ENCODE measurements at regions of chr6 and their contacts with region 1.

Region 1: DNA sequence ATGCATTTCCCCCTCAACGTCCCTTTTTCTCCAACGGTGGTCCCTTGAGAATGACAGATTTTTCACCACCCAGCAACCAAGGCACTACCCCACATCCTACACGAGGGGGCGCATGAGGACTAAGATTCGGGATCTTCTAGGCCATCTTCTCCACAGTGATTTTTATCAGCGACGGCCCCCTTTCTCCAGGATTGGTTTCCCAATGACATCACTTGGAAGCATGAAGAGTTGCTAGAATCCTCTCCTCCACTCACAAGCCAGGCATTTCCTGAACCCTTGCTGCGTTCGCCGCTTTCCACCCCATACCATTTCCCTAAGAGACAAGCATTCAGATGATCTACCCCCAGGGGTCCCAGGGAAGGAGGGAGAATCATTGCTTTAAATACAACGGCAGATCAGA is 252.0 kb downstream of the HIVEP2 start:
- DNase-seq: peak; percentile 73
- ATAC-seq: peak; percentile 84
- H3K4me3 Mint-ChIP-seq: no peak overlapping the region
- H3K27ac Mint-ChIP-seq: no peak overlapping the region
- H3K4me1 Mint-ChIP-seq: peaks cover 24% of the 10 kb centered on the region
- H3K27me3 Mint-ChIP-seq: no peaks in the 10 kb centered on the region
- CTCF ChIP-seq: peak; percentile 82

Region 2: DNA sequence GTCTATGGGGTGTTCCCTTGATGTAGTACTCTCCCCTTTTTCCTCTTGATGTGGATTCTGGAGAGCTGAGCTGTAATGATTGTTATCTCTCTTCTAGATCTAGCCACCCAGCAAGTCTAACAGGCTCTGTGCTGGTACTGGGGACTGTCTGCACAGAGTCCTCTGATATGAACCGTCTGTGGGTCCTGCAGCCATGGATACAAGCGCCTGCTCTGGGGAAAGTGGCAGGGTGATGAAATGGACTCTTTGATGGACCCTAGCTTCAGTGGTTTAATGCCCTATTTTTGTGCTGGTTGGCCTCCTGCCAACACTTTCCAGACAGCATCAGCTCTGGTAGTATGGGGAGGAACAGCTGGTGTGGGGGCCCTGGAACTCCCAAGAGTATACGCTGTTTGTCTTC is 174.8 kb before region 1 on chr6:
- CTCF ChIA-PET with region 1: no interaction called
- POLR2A ChIA-PET with region 1: no interaction called
- intact Hi-C with region 1: no loop called
- DNase-seq: no peak
- ATAC-seq: no peak
- H3K4me3 Mint-ChIP-seq: no peak overlapping the region
- H3K27ac Mint-ChIP-seq: no peak overlapping the region
- H3K4me1 Mint-ChIP-seq: no peaks in the 10 kb centered on the region
- H3K27me3 Mint-ChIP-seq: no peaks in the 10 kb centered on the region
- CTCF ChIP-seq: no peak

Region 3: DNA sequence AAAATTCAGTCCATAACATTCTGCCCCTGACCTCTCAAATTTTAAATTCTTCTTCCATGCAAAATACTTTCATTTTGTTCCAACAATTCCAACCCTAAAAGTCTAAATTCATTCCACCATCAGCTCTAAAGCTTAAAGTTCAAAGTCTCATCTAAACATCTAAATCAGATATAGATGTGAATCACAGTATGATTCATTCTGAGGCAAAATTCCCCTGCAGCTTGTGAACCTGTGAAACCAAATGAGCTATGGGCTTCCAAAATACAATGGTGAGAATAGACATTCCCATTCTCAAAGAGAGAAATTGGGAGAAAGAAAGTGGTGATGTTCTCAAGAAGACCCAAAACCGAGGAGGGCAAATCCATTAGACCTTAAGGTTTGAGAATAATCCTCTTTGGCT is 57.8 kb before region 1 on chr6:
- CTCF ChIA-PET with region 1: no interaction called
- POLR2A ChIA-PET with region 1: no interaction called
- intact Hi-C with region 1: no loop called
- DNase-seq: no peak
- ATAC-seq: no peak
- H3K4me3 Mint-ChIP-seq: no peak overlapping the region
- H3K27ac Mint-ChIP-seq: no peak overlapping the region
- H3K4me1 Mint-ChIP-seq: peaks cover 2% of the 10 kb centered on the region
- H3K27me3 Mint-ChIP-seq: no peaks in the 10 kb centered on the region
- CTCF ChIP-seq: no peak

Region 4: DNA sequence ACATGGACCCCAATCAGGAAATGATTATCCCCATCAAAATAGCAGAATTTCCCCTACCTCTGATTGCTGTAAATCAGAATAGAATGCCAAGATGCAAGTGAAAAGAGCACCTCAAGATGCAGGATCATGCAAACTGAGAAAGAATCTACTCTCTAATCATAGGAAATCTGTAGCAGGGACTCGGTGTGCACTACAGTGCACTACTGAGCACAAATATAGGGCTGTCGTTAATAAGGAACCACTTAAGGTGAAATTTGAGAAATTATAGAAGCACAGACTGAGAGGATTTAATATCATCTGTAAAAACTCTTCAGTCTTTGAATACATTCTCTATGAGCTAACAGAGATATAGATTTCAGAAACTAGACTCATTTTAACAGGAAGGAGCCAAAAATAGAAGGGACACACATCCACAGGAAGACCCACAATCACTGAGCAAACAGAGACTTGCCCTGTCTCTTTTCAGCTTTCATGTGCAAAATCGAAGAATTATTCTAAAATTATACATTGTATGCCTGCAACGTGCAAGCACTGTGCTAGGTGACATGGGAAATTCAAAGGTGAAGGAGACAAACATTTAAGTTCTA is 26.2 kb before region 1 on chr6:
- CTCF ChIA-PET with region 1: no interaction called
- POLR2A ChIA-PET with region 1: no interaction called
- intact Hi-C with region 1: no loop called
- DNase-seq: no peak
- ATAC-seq: no peak
- H3K4me3 Mint-ChIP-seq: no peak overlapping the region
- H3K27ac Mint-ChIP-seq: no peak overlapping the region
- H3K4me1 Mint-ChIP-seq: peaks cover 14% of the 10 kb centered on the region
- H3K27me3 Mint-ChIP-seq: no peaks in the 10 kb centered on the region
- CTCF ChIP-seq: no peak

Region 5: DNA sequence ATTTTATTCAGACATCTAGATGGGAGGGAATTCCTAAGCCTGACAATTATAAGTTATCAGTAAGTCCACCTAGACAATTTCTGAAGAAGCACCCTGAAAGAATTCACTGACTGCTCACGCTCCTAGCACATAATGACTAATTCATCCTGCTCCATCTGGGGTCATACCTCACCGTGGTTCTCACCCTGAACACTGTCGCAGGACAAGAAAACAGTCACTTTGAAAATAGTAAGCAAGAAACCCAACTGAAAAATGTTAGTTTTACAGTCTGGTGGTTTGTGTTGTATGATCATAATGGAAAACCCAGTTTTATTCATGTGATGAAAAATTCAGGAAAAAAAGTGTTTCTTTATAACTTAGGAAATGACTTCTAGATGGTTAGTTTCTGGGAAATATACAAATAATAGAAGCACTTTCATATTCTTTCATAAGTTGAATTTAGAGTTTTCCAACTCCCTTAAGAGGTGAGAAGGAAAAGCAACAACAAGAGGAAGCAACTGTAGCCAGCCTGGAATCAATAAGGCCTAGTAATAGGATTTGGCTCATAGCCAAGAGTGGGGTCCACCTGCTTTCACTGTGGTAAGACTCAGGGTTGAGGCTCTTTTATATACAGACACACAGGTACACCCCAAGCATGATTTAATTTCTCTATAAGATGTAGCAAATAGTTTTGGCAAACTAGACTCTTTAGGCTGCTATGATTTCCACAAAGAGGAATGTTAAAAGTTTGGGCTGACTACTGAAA is 157.9 kb after region 1 on chr6:
- CTCF ChIA-PET with region 1: interaction called, 10 read pairs
- POLR2A ChIA-PET with region 1: interaction called, 3 read pairs
- intact Hi-C with region 1: loop called (anchors 5 kb)
- DNase-seq: peak; percentile 68
- ATAC-seq: peak; percentile 64
- H3K4me3 Mint-ChIP-seq: peak overlapping the region; percentile 40
- H3K27ac Mint-ChIP-seq: peak overlapping the region; percentile 93
- H3K4me1 Mint-ChIP-seq: peaks cover 97% of the 10 kb centered on the region
- H3K27me3 Mint-ChIP-seq: no peaks in the 10 kb centered on the region
- CTCF ChIP-seq: no peak

Region 6: DNA sequence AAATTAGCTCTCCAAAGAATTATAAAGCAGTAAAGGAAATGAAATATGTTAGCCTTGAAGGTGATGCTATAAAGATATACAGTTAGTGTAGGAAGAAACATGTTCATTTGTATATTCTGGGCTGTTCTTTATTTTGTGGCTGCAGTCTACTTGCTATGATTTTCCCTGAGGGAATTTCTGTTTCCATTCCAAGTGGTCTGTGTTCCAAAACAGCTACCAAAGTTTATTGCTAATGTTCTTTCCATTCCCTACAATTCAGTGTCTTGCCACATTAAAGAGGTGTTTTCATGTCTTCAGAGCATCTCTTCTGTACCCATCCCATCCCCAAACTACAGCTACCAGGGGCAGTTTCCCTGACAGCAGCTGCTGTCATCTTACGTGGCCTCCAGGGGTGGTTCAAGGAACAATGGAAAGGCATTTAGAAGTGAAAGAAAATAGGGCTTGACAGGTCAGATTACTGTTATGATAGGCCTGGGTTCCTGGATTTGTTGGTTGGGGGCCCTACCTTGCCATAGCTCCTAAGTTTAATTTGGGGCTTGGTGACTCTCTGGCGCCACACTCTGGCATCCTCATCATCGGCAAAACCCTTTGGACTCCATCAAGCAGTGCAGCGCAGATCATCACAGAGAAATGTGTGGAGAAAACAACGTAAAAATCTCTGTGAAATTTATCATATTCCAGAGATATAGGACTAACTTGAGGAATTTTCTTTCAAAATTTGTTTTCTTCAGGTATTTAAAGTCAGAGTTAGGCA is 333.9 kb after region 1 on chr6:
- CTCF ChIA-PET with region 1: interaction called, 39 read pairs
- POLR2A ChIA-PET with region 1: no interaction called
- intact Hi-C with region 1: loop called (anchors 2 kb)
- DNase-seq: peak; percentile 72
- ATAC-seq: peak; percentile 71
- H3K4me3 Mint-ChIP-seq: no peak overlapping the region
- H3K27ac Mint-ChIP-seq: peak overlapping the region; percentile 16
- H3K4me1 Mint-ChIP-seq: peaks cover 8% of the 10 kb centered on the region
- H3K27me3 Mint-ChIP-seq: no peaks in the 10 kb centered on the region
- CTCF ChIP-seq: peak; percentile 81

Region 7: GRCh38 chr6:143337201-143337949 is 644.4 kb after region 1 on chr6:
- CTCF ChIA-PET with region 1: interaction called, 14 read pairs
- POLR2A ChIA-PET with region 1: no interaction called
- intact Hi-C with region 1: no loop called
- DNase-seq: peak; percentile 70
- ATAC-seq: peak; percentile 71
- H3K4me3 Mint-ChIP-seq: no peak overlapping the region
- H3K27ac Mint-ChIP-seq: no peak overlapping the region
- H3K4me1 Mint-ChIP-seq: peaks cover 9% of the 10 kb centered on the region
- H3K27me3 Mint-ChIP-seq: no peaks in the 10 kb centered on the region
- CTCF ChIP-seq: peak; percentile 46

Measured in activated CD8-positive, alpha-beta T cell treated with anti-CD3 and anti-CD28 coated beads for 36 hours (primary cell).